ENCODE measurements at regions of chr1 and their contacts with region 1.

Region 1: DNA sequence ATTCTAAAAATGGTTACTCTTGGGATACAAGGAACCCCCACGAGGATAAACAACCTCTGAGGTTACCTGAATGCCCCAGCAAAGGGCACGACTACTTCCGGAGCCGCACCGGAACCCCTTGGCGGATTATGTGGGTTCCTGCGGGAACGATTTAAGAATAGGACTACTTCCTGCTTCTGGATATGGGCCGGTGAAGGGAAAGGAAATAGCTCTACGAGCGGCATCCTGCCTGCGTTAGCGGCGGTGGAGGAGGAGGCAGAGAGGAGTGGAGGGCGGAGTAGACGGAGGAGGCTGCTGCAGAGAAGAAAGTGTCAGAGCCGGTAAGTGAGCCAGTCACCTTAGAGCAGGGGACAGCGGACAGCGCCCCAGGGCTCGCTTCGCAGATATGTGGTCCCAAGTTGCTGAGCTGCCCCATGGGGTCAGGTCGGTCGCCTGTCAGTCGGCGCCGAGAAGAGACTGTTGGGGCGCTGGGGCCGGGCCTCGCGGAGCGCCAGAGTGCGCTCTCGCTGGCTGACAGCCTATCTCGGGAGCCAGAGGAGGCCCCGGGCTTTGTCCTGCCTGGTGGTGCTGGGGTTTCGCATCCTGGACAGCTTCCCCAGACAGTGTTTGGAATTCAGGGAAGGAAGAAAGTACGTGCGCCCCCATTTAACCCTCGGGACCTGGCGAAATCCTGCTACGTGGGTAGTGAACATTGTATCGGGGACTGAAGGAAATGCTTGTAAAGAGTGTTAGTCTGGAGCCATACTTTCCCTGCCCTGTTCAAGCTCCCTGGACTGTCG is at the start of gene KLHL20:
- H3K4me3 ChIP-seq: peak within 1 kb of the TSS; percentile 99
- H3K27ac ChIP-seq: peak within 1 kb of the TSS; percentile 38
- H3K4me1 ChIP-seq: no peaks in the 10 kb centered on the region
- CTCF ChIP-seq: peak; percentile 82

Region 2: DNA sequence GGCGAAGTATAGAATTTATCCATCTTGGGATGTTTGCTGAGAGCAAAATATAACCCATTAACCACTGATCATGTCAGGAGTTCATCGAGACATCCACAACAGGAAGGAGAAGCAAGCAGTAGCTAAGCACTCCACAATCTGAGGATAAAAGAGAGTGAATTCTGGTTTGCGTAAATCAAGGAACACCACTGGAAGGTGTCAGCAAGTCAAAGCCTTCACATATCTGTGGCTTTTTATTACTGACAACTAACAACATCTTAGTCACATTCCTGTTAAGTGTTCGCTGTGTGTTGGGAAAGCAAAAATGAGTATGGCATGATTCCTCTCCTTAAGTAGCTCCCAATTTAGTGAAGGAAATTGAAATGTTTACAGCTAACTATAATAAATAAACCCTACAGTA is 65.0 kb after region 1 on chr1:
- CTCF ChIA-PET with region 1: no interaction called
- POLR2A ChIA-PET with region 1: no interaction called
- H3K4me3 ChIP-seq: no peak overlapping the region
- H3K27ac ChIP-seq: no peak overlapping the region
- H3K4me1 ChIP-seq: no peaks in the 10 kb centered on the region
- CTCF ChIP-seq: no peak

Region 3: GRCh38 chr1:173867753-173868265 is 152.9 kb after region 1 on chr1 and contains the start of gene GAS5:
- CTCF ChIA-PET with region 1: no interaction called
- POLR2A ChIA-PET with region 1: interaction called, 12 read pairs
- H3K4me3 ChIP-seq: peak within 1 kb of the TSS; percentile 90
- H3K27ac ChIP-seq: peak within 1 kb of the TSS; percentile 86
- H3K4me1 ChIP-seq: no peaks in the 10 kb centered on the region; the same call in 1 of the 2 replicates
- CTCF ChIP-seq: no peak